GM10248 (cell line): ENCODE measurements at regions of chr6 and their contacts with region 1.

Region 1: DNA sequence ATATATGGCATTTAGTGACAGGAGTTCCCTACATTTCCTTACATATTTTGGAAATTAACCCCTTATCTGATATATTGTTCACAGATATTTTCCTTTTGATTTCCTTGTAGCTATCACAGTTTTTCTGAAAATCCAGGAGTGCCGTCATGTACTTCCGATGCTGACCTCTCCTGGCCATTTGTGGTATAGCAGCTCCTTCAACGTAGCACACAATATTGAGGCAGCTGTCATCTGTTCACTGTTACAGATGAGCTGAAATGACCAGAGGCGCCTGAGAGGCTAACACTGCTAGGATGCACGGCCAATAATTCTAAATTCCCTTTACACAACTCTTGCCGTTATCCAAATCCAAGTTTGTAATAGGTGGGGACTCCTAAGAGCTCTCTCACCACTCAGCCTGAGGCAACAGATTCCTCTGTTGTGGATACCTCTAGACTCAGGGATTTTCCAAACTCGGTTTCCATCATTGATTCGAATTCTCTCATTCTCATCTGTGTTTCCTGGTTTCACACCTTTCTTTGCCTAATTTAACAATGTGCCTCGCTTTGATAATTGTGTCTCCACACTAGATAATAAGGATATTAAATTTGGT is 53.0 kb downstream of the MMUT start:
- DNase-seq: peak; percentile 38
- CTCF ChIP-seq: peak; percentile 90

Region 2: DNA sequence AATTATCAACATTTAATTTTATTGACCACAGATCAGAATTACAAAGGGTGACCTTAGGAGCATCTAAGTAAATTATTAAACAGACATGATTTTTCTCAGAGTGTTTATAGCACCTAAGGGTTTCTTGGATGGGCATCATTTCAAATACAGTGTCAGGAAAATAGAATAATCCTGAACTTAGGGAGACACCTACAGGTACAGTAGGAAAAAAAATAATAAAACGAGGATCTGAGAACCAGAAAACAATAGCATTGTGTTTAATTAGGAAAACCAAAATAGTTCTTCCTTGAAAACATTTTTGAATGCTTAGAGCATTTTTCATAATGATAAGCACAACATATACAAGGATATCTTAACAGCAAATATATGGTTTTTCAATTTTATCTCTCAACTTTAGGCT is 13.8 kb after region 1 on chr6:
- CTCF ChIA-PET with region 1: interaction called, 21 read pairs
- POLR2A ChIA-PET with region 1: no interaction called
- DNase-seq: no peak
- CTCF ChIP-seq: no peak

Region 3: GRCh38 chr6:49430187-49430586 is 20.1 kb after region 1 on chr6:
- CTCF ChIA-PET with region 1: interaction called, 20 read pairs
- POLR2A ChIA-PET with region 1: no interaction called
- DNase-seq: no peak
- CTCF ChIP-seq: no peak

Region 4: DNA sequence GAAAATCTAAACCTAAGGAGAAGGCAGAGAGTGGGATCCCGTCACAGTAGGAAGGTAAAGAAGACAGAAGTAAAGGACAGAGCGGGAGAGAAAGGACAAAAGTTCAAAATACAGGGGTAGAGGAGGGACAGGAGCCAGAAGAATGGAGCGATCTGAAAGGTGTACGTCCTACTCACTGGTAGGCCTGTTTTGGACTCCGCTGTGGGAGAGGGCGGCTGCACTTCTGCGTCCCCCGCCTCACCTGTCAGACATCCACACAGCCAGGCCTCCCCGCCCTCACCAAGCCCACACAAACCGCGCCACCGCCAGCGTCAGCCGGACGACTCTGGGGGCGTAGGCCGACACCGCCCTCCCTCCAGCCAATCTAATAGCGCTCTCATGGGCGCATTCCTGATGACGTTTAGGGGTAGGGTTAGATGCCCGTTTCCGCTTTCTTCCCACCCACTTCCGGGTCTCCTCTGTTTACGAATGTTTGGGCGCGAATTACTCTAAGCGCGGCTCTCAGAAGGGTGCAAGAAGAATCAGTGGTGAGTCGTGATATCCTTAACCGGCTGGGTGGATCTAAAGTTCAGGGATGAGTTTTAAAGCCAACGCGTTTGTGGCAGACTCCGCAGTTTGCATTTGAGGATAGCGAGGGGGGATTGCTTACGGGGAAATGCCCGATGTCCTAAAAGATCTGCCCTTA is 53.0 kb after region 1 on chr6 and contains the starts of genes CENPQ and MMUT:
- CTCF ChIA-PET with region 1: no interaction called
- POLR2A ChIA-PET with region 1: no interaction called
- DNase-seq: peak; percentile 90
- CTCF ChIP-seq: no peak